ENCODE measurements at regions of chr1 and their contacts with region 1.

Region 1: GRCh38 chr1:65812065-65812464 is 19.4 kb downstream of the PDE4B start:
- DNase-seq: peak; percentile 72
- H3K4me3 Mint-ChIP-seq: no peak overlapping the region
- H3K27ac Mint-ChIP-seq: peak overlapping the region; percentile 38
- H3K4me1 Mint-ChIP-seq: peaks cover 35% of the 10 kb centered on the region
- H3K27me3 Mint-ChIP-seq: peaks cover 20% of the 10 kb centered on the region

Region 2: DNA sequence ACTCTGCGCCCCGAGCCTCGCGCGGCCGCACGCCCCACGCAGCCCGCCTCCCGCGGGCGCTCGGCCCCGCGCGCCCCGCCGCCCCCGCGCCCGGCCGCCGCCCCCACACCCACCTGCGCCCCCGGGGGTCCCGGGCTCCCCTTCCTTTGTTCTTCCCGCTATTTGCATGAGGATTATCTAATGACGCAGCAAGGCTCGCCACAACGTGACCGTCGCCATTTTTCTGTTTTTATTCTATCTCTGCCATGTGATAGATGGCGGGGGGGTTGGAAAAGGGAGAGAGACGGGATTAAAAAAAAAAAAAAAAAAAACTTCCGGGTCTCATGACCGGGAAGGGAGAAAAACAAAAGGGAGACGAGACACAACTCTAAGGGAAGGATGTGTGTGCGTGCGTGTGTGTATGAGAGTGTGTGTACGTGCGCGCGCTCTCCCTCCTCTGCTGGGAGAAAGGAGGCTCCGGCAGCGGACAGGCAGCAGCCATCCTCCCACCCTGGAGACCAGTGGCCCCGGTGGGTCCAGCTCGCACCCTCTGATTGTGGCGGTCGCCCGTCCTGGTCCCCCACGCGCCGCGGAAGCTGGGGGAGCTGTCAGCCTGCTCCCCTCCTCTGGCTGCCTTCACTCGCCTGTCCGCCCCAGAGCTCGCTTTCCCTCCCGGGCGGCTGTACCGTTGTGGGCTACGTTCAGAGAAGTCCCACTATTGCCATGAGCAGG is 744.4 kb before region 1 on chr1:
- intact Hi-C with region 1: loop called (anchors 10 kb)
- DNase-seq: peak; percentile 38
- H3K4me3 Mint-ChIP-seq: peak overlapping the region; percentile 89
- H3K27ac Mint-ChIP-seq: peak overlapping the region; percentile 97
- H3K4me1 Mint-ChIP-seq: peaks cover 31% of the 10 kb centered on the region
- H3K27me3 Mint-ChIP-seq: peaks cover 2% of the 10 kb centered on the region

Region 3: DNA sequence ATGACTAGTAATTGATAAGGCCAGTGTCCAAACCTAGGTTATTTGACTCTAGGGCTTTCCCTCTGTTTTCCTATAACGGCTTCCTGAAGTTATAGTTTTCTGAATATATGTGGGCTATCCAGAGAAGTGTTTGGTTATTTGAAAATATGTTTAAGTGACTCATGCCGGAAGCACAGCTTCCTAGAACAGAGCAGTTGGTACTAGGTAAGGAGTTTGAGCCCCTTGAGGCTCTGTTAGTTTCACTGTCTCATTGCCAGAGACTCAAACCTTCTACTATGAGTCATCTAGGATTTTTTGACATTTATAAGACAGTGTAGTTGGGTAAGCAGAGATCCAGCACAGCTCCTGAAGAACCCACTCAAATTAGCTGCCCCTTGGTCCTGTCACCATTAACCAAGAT is 418.7 kb before region 1 on chr1:
- intact Hi-C with region 1: loop called (anchors 1 kb)
- DNase-seq: peak; percentile 13
- H3K4me3 Mint-ChIP-seq: no peak overlapping the region
- H3K27ac Mint-ChIP-seq: peak overlapping the region; percentile 62
- H3K4me1 Mint-ChIP-seq: peaks cover 80% of the 10 kb centered on the region
- H3K27me3 Mint-ChIP-seq: no peaks in the 10 kb centered on the region

Region 4: GRCh38 chr1:65866439-65866838 is 54.4 kb after region 1 on chr1:
- intact Hi-C with region 1: loop called (anchors 1 kb)
- DNase-seq: no peak
- H3K4me3 Mint-ChIP-seq: no peak overlapping the region
- H3K27ac Mint-ChIP-seq: no peak overlapping the region
- H3K4me1 Mint-ChIP-seq: peaks cover 11% of the 10 kb centered on the region
- H3K27me3 Mint-ChIP-seq: peaks cover 7% of the 10 kb centered on the region

Region 5: GRCh38 chr1:66182551-66183178 is 370.6 kb after region 1 on chr1:
- intact Hi-C with region 1: loop called (anchors 5 kb)
- DNase-seq: peak; percentile 29
- H3K4me3 Mint-ChIP-seq: no peak overlapping the region
- H3K27ac Mint-ChIP-seq: peak overlapping the region; percentile 30
- H3K4me1 Mint-ChIP-seq: peaks cover 32% of the 10 kb centered on the region
- H3K27me3 Mint-ChIP-seq: peaks cover 1% of the 10 kb centered on the region

Region 6: GRCh38 chr1:66436378-66437145 is 624.5 kb after region 1 on chr1:
- intact Hi-C with region 1: loop called (anchors 2 kb)
- DNase-seq: peak; percentile 31
- H3K4me3 Mint-ChIP-seq: no peak overlapping the region
- H3K27ac Mint-ChIP-seq: no peak overlapping the region
- H3K4me1 Mint-ChIP-seq: peaks cover 32% of the 10 kb centered on the region
- H3K27me3 Mint-ChIP-seq: peaks cover 5% of the 10 kb centered on the region